Natural killer cell (primary cell): ENCODE measurements at regions of chr9 and their contacts with region 1.

Region 1: DNA sequence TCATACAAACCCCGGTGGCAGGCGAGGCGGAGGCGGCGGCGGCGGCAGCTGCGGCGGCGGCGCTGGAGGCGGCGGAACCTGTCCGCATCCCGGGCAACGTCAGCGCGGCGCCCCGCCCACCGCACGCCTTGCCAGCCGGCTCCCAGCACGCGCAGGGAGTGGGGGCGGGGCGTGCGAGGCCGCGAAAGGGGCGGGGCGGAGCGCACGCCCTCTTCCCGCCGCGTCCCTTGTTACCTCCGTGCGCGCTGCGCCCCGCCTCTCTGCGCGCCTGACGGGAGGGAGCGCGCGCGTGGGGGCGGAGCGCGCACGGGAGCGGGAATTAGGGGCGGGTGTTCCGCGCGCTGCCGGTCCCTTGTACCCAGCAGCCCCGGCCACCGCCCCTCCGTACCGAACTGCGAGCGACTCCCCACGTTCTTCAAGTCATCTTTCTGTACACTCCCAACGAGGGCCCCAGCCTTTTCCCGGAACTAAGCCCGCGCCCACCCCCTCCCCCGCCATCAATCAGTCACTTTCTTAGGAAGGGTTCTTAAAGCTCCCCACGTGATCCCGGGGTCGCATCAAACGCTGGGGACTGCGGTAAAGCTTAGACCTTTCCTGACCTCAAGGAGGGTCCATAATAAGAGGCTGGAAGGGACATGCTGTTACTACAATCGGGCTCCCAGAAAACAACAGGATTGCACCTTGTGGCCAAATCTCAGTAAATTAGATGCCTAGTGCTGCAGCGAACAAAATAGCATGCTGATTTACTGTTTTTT is at the start of gene AGTPBP1:
- DNase-seq: peak; percentile 98
- ATAC-seq: peak; percentile 83 to 95 (median 88)
- H3K4me3 ChIP-seq: peak within 1 kb of the TSS; percentile 87
- H3K4me3 Mint-ChIP-seq: peak within 1 kb of the TSS; percentile 93
- H3K27ac ChIP-seq: peak within 1 kb of the TSS; percentile 92
- H3K27ac Mint-ChIP-seq: peak within 1 kb of the TSS; percentile 91 to 94
- H3K4me1 ChIP-seq: peaks cover 26% of the 10 kb centered on the region
- H3K4me1 Mint-ChIP-seq: peaks cover 67 to 77% of the 10 kb centered on the region in 2 donors
- H3K27me3 ChIP-seq: no peaks in the 10 kb centered on the region
- H3K27me3 Mint-ChIP-seq: no peaks in the 10 kb centered on the region
- CTCF ChIP-seq: no peak
- total RNA-seq, gene AGTPBP1: 140 to 150 (median 140) TPM

Region 2: DNA sequence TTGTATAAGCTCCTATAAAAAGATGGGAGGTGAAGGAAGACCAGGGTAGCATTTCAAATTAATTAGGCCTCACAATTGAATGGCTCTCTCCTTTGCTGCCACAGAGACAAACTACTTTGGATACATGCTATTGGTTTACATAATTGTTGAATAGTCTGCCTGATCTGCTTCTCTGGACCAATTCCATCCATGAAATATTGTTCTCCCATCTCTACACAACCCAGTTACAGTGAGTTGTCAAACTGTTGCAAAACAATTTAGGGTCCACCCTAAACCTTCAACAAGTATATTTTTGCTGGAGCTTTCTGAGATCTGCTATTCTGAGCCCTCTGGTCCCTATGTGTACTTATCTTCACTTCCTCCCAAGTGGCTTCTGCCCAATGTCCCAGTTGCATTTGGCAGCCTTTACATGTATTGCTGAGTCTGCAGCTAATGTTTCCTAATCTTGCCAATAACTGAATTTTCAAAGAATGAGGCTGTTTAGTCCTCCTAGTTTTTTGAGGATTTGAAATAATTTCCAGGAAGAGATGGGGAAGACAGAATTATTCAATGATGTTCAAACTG is 39.2 kb before region 1 on chr9:
- intact Hi-C with region 1: loop called (anchors 2 kb)
- DNase-seq: no peak
- ATAC-seq: no peak
- H3K4me3 ChIP-seq: no peak overlapping the region
- H3K4me3 Mint-ChIP-seq: no peak overlapping the region
- H3K27ac ChIP-seq: no peak overlapping the region
- H3K27ac Mint-ChIP-seq: peak overlapping the region; percentile 9 to 30
- H3K4me1 ChIP-seq: peaks cover 3% of the 10 kb centered on the region
- H3K4me1 Mint-ChIP-seq: peaks cover 58 to 65% of the 10 kb centered on the region in 2 donors
- H3K27me3 ChIP-seq: no peaks in the 10 kb centered on the region
- H3K27me3 Mint-ChIP-seq: no peaks in the 10 kb centered on the region
- CTCF ChIP-seq: no peak

Region 3: GRCh38 chr9:85716031-85716877 is 25.8 kb before region 1 on chr9:
- intact Hi-C with region 1: loop called (anchors 1 kb)
- DNase-seq: peak in 1 of 2 donors; percentile 36
- ATAC-seq: peak; percentile 30 to 61 (median 32)
- H3K4me3 ChIP-seq: no peak overlapping the region
- H3K4me3 Mint-ChIP-seq: peak overlapping the region; percentile 78
- H3K27ac ChIP-seq: peak overlapping the region; percentile 81
- H3K27ac Mint-ChIP-seq: peak overlapping the region; percentile 82 to 91
- H3K4me1 ChIP-seq: peaks cover 26% of the 10 kb centered on the region
- H3K4me1 Mint-ChIP-seq: peaks cover 72 to 75% of the 10 kb centered on the region in 2 donors
- H3K27me3 ChIP-seq: no peaks in the 10 kb centered on the region
- H3K27me3 Mint-ChIP-seq: no peaks in the 10 kb centered on the region
- CTCF ChIP-seq: peak; percentile 28

Region 4: GRCh38 chr9:85729882-85730281 is 12.2 kb before region 1 on chr9:
- intact Hi-C with region 1: loop called (anchors 1 kb)
- DNase-seq: no peak
- ATAC-seq: peak in 2 of 3 donors; percentile 37 to 53
- H3K4me3 ChIP-seq: no peak overlapping the region
- H3K4me3 Mint-ChIP-seq: no peak overlapping the region
- H3K27ac ChIP-seq: peak overlapping the region; percentile 4
- H3K27ac Mint-ChIP-seq: peak overlapping the region; percentile 58 to 78
- H3K4me1 ChIP-seq: peaks cover 25% of the 10 kb centered on the region
- H3K4me1 Mint-ChIP-seq: peaks cover 78 to 84% of the 10 kb centered on the region in 2 donors
- H3K27me3 ChIP-seq: no peaks in the 10 kb centered on the region
- H3K27me3 Mint-ChIP-seq: no peaks in the 10 kb centered on the region
- CTCF ChIP-seq: no peak